ENCODE measurements at regions of chr7 and their contacts with region 1.

Region 1: GRCh38 chr7:112495810-112496462 is 15.1 kb downstream of the LSMEM1 start:
- DNase-seq: peak; percentile 47
- ATAC-seq: peak; percentile 94
- H3K4me3 Mint-ChIP-seq: no peak overlapping the region
- H3K27ac Mint-ChIP-seq: no peak overlapping the region
- H3K4me1 Mint-ChIP-seq: peaks cover 2% of the 10 kb centered on the region; the same call in 1 of the 2 replicates
- H3K27me3 Mint-ChIP-seq: peaks cover 2% of the 10 kb centered on the region; the same call in 1 of the 2 replicates
- CTCF ChIP-seq: 0 out of 2 replicates have a peak, but pooled peaks have one; percentile 17

Region 2: GRCh38 chr7:111741811-111742240 is 754.1 kb before region 1 on chr7:
- CTCF ChIA-PET with region 1: interaction called, 18 read pairs
- POLR2A ChIA-PET with region 1: no interaction called
- DNase-seq: peak; percentile 59
- ATAC-seq: peak; percentile 87
- H3K4me3 Mint-ChIP-seq: no peak overlapping the region
- H3K27ac Mint-ChIP-seq: no peak overlapping the region
- H3K4me1 Mint-ChIP-seq: peaks cover 15% of the 10 kb centered on the region
- H3K27me3 Mint-ChIP-seq: no peaks in the 10 kb centered on the region
- CTCF ChIP-seq: peak; percentile 31; the same call in 1 of the 2 replicates

Region 3: GRCh38 chr7:111763221-111763801 is 732.6 kb before region 1 on chr7:
- CTCF ChIA-PET with region 1: interaction called, 13 read pairs
- POLR2A ChIA-PET with region 1: interaction called, 9 read pairs
- DNase-seq: peak; percentile 54
- ATAC-seq: peak; percentile 98
- H3K4me3 Mint-ChIP-seq: no peak overlapping the region
- H3K27ac Mint-ChIP-seq: no peak overlapping the region
- H3K4me1 Mint-ChIP-seq: no peaks in the 10 kb centered on the region
- H3K27me3 Mint-ChIP-seq: no peaks in the 10 kb centered on the region
- CTCF ChIP-seq: peak; percentile 50

Region 4: GRCh38 chr7:112481833-112482670 is 13.9 kb before region 1 on chr7:
- CTCF ChIA-PET with region 1: interaction called, 15 read pairs
- POLR2A ChIA-PET with region 1: no interaction called
- DNase-seq: no peak
- ATAC-seq: peak; percentile 67
- H3K4me3 Mint-ChIP-seq: no peak overlapping the region
- H3K27ac Mint-ChIP-seq: no peak overlapping the region
- H3K4me1 Mint-ChIP-seq: peaks cover 10% of the 10 kb centered on the region
- H3K27me3 Mint-ChIP-seq: no peaks in the 10 kb centered on the region
- CTCF ChIP-seq: no peak

Region 5: GRCh38 chr7:112743811-112744210 is 247.9 kb after region 1 on chr7:
- CTCF ChIA-PET with region 1: no interaction called
- POLR2A ChIA-PET with region 1: no interaction called
- DNase-seq: no peak
- ATAC-seq: peak; percentile 73
- H3K4me3 Mint-ChIP-seq: no peak overlapping the region
- H3K27ac Mint-ChIP-seq: no peak overlapping the region
- H3K4me1 Mint-ChIP-seq: no peaks in the 10 kb centered on the region
- H3K27me3 Mint-ChIP-seq: no peaks in the 10 kb centered on the region
- CTCF ChIP-seq: no peak